ENCODE measurements at regions of chr17 and their contacts with region 1.

Region 1: DNA sequence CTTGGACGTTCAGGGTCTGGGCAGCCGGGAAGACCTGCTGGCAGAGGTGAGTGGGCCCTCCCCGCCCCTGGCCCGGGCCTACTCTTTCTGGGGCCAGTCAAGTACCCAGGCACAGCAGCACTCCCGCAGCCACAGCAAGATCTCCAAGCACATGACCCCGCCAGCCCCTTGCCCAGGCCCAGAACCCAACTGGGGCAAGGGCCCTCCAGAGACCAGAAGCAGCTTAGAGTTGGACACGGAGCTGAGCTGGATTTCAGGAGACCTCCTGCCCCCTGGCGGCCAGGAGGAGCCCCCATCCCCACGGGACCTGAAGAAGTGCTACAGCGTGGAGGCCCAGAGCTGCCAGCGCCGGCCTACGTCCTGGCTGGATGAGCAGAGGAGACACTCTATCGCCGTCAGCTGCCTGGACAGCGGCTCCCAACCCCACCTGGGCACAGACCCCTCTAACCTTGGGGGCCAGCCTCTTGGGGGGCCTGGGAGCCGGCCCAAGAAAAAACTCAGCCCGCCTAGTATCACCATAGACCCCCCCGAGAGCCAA is 8.6 kb upstream of the ABCC3 start:
- DNase-seq: peak in 1 of 2 donors; percentile 75
- ATAC-seq: no peak

Region 2: GRCh38 chr17:50482516-50482915 is 143.6 kb before region 1 on chr17:
- intact Hi-C with region 1: loop called in 1 of 2 experiments (anchors 10 kb)
- DNase-seq: peak; percentile 91 to 95
- ATAC-seq: peak; percentile 49

Region 3: DNA sequence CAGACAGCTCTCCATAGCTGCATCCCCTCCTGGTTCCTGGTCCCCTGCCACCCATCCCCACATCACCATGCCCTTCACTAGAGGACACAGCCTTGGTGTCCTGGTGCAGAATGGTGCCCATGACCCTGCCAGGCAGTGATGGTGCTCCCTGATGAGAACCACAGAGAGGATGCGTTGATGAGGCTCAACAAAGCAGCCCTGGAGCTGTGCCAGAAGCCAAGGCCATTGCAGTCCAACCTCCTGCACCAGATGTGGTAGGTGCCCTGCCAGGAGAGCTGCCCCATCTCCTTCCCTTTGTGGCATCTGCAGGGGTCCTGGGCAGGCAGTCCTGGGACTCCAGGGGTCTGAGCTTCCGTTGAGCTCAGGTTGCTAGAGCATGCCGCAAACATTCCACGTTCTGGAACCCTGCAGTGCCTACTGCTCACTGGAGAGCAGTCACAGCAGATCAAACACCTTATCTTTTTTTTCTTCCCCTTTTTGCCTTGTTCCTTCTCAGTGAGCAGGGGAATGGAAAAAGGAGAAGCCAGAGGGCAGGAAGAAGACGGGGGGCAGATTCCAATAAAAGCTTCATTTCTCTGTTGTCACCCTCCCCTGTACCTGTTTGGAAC is 98.8 kb before region 1 on chr17:
- intact Hi-C with region 1: no loop called
- DNase-seq: no peak
- ATAC-seq: no peak

Region 4: GRCh38 chr17:50689956-50690886 is 64.1 kb after region 1 on chr17:
- intact Hi-C with region 1: loop called in 1 of 2 experiments (anchors 5 kb)
- DNase-seq: no peak
- ATAC-seq: no peak

Region 5: GRCh38 chr17:50719144-50719923 is 93.2 kb after region 1 on chr17 and contains the start of gene LUC7L3:
- intact Hi-C with region 1: no loop called
- DNase-seq: peak; percentile 91 to 95
- ATAC-seq: peak; percentile 94
- total RNA-seq, gene LUC7L3: 90.0 to 110 TPM